ENCODE measurements at regions of chr10 and their contacts with region 1.

Region 1: GRCh38 chr10:70925377-70926225 is 37.2 kb upstream of the PCBD1 start:
- DNase-seq: peak in 1 of 2 experiments; percentile 83
- H3K4me3 ChIP-seq: no peak overlapping the region
- H3K4me3 Mint-ChIP-seq: no peak overlapping the region
- H3K27ac Mint-ChIP-seq: no peak overlapping the region
- H3K4me1 ChIP-seq: no peaks in the 10 kb centered on the region
- H3K4me1 Mint-ChIP-seq: peaks cover 8% of the 10 kb centered on the region
- H3K27me3 ChIP-seq: peaks cover 4% of the 10 kb centered on the region; the same call in 1 of the 2 replicates
- H3K27me3 Mint-ChIP-seq: peaks cover 6% of the 10 kb centered on the region
- CTCF ChIP-seq: peak; percentile 99 to 100

Region 2: DNA sequence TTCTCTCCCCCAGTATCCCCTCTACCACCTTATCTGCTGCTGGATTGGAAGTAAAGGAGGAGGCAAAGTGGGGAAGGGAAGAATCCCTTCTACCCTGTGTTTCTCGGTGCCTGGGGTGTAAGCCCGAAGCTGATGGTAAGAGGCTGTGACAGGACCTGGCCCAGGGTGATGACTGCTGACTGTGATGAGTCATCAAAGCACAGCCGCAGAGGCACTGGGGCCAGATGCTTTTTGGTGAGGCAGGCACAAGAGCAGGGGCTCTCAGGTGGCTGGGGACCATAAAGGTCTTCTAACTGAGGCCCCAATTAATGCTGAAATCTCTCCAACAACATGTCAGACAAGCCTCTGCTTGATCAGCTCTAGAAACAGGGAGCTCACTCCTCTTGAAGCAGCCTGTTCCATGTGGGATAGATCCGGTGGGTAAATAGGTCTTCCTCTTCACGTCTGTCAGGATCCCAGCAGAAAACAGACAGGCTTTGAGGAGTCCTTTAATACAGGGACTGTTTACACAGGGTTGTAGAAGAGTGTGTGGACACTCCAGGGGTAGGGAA is 48.8 kb after region 1 on chr10:
- CTCF ChIA-PET with region 1: no interaction called
- POLR2A ChIA-PET with region 1: no interaction called
- intact Hi-C with region 1: no loop called
- DNase-seq: no peak
- H3K4me3 ChIP-seq: no peak overlapping the region
- H3K4me3 Mint-ChIP-seq: no peak overlapping the region
- H3K27ac Mint-ChIP-seq: no peak overlapping the region
- H3K4me1 ChIP-seq: peaks cover 7% of the 10 kb centered on the region; the same call in 1 of the 2 replicates
- H3K4me1 Mint-ChIP-seq: no peaks in the 10 kb centered on the region
- H3K27me3 ChIP-seq: no peaks in the 10 kb centered on the region
- H3K27me3 Mint-ChIP-seq: no peaks in the 10 kb centered on the region
- CTCF ChIP-seq: no peak

Region 3: GRCh38 chr10:71033396-71033980 is 107.9 kb after region 1 on chr10:
- CTCF ChIA-PET with region 1: no interaction called
- POLR2A ChIA-PET with region 1: no interaction called
- intact Hi-C with region 1: no loop called
- DNase-seq: peak in 1 of 2 experiments; percentile 33
- H3K4me3 ChIP-seq: no peak overlapping the region
- H3K4me3 Mint-ChIP-seq: no peak overlapping the region
- H3K27ac Mint-ChIP-seq: no peak overlapping the region
- H3K4me1 ChIP-seq: no peaks in the 10 kb centered on the region
- H3K4me1 Mint-ChIP-seq: no peaks in the 10 kb centered on the region
- H3K27me3 ChIP-seq: 0 out of 2 replicates have a peak, but pooled peaks cover 1% of the 10 kb centered on the region
- H3K27me3 Mint-ChIP-seq: peaks cover 11% of the 10 kb centered on the region
- CTCF ChIP-seq: peak; percentile 19 to 31

Region 4: GRCh38 chr10:71064413-71065118 is 139.0 kb after region 1 on chr10:
- CTCF ChIA-PET with region 1: interaction called, 3 read pairs
- POLR2A ChIA-PET with region 1: no interaction called
- intact Hi-C with region 1: loop called (anchors 5 kb)
- DNase-seq: no peak
- H3K4me3 ChIP-seq: no peak overlapping the region
- H3K4me3 Mint-ChIP-seq: no peak overlapping the region
- H3K27ac Mint-ChIP-seq: no peak overlapping the region
- H3K4me1 ChIP-seq: no peaks in the 10 kb centered on the region
- H3K4me1 Mint-ChIP-seq: no peaks in the 10 kb centered on the region
- H3K27me3 ChIP-seq: no peaks in the 10 kb centered on the region; the same call in 1 of the 2 replicates
- H3K27me3 Mint-ChIP-seq: peaks cover 5% of the 10 kb centered on the region
- CTCF ChIP-seq: peak in 1 of 2 experiments; percentile 17

Region 5: GRCh38 chr10:71138166-71138830 is 212.7 kb after region 1 on chr10:
- CTCF ChIA-PET with region 1: no interaction called
- POLR2A ChIA-PET with region 1: no interaction called
- intact Hi-C with region 1: loop called (anchors 5 kb)
- DNase-seq: no peak
- H3K4me3 ChIP-seq: no peak overlapping the region
- H3K4me3 Mint-ChIP-seq: no peak overlapping the region
- H3K27ac Mint-ChIP-seq: no peak overlapping the region
- H3K4me1 ChIP-seq: no peaks in the 10 kb centered on the region
- H3K4me1 Mint-ChIP-seq: no peaks in the 10 kb centered on the region
- H3K27me3 ChIP-seq: no peaks in the 10 kb centered on the region
- H3K27me3 Mint-ChIP-seq: peaks cover 24% of the 10 kb centered on the region
- CTCF ChIP-seq: no peak

Region 6: DNA sequence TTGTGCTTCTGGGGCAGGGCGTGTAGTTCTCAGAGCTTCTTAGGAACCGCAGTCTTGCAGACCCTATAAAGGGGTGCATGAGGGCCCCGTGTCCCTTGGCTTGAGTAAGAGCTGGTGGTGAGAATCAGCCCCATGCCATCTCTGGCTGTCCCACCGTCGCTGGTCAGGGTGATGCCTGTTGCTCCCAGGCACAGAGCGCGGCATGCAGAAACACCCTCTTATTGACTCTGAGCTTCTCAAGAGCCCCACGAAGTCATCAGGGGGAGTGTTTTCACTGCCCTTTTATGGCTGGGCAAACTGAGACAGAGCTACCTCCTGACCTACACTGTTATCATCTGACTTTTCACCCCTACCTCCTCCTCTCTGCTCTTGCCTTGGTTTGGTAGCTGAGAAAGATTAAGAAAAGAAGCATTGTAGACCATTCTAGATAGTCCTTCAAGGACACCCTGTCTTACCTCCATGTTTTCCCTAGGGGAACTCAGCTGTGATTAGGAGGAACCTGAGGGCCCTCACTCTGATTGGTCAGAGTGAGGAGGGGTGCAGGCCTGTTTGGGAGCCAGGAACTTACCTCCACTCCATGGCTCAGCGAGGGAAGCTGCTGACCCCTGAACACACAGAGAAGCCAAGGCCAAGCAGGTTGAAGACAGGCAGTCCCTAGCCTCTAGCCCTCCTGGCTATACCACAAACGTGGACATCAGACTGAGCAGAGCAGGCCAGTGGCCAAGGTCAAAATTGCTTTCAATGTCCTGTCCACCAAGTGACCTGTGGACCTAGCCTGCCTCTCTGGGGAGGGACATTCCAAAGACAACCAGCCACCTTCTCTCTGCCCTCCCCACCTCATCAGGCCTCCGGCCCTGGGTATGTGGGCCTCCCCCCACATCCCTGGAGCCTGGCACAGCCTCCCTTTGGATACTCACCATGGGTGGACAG is 304.4 kb after region 1 on chr10:
- CTCF ChIA-PET with region 1: no interaction called
- POLR2A ChIA-PET with region 1: interaction called, 11 read pairs
- intact Hi-C with region 1: no loop called
- DNase-seq: peak; percentile 51 to 79
- H3K4me3 ChIP-seq: no peak overlapping the region
- H3K4me3 Mint-ChIP-seq: no peak overlapping the region
- H3K27ac Mint-ChIP-seq: peak overlapping the region; percentile 12
- H3K4me1 ChIP-seq: peaks cover 49% of the 10 kb centered on the region
- H3K4me1 Mint-ChIP-seq: peaks cover 39% of the 10 kb centered on the region
- H3K27me3 ChIP-seq: no peaks in the 10 kb centered on the region
- H3K27me3 Mint-ChIP-seq: no peaks in the 10 kb centered on the region
- CTCF ChIP-seq: no peak

Region 7: GRCh38 chr10:71285180-71285545 is 359.6 kb after region 1 on chr10:
- CTCF ChIA-PET with region 1: interaction called, 10 read pairs
- POLR2A ChIA-PET with region 1: no interaction called
- intact Hi-C with region 1: loop called (anchors 1 kb)
- DNase-seq: peak; percentile 74 to 80
- H3K4me3 ChIP-seq: no peak overlapping the region
- H3K4me3 Mint-ChIP-seq: no peak overlapping the region
- H3K27ac Mint-ChIP-seq: no peak overlapping the region
- H3K4me1 ChIP-seq: peaks cover 12% of the 10 kb centered on the region
- H3K4me1 Mint-ChIP-seq: peaks cover 3% of the 10 kb centered on the region
- H3K27me3 ChIP-seq: no peaks in the 10 kb centered on the region
- H3K27me3 Mint-ChIP-seq: no peaks in the 10 kb centered on the region
- CTCF ChIP-seq: peak; percentile 97

Measured in Caco-2 (cell line).